Heart right ventricle (tissue), 16 donors: ENCODE measurements at regions of chr5 and their contacts with region 1.

Region 1: GRCh38 chr5:172106511-172107356 is 81.3 kb downstream of the STK10 start:
- DNase-seq: peak in 1 of 2 donors; percentile 72
- ATAC-seq: peak in 6 of 8 donors; percentile 28 to 46 (median 38)
- H3K4me3 ChIP-seq: peak overlapping the region in 7 of 10 donors; percentile 6 to 39 (median 26)
- H3K27ac ChIP-seq: peak overlapping the region in 1 of 10 donors; percentile 58
- H3K4me1 ChIP-seq: peaks cover 15 to 74% (median 59%) of the 10 kb centered on the region in 9 donors
- H3K27me3 ChIP-seq: no peaks in the 10 kb centered on the region
- CTCF ChIP-seq: peak; percentile 89 to 98 (median 93)

Region 2: GRCh38 chr5:171806976-171807747 is 299.6 kb before region 1 on chr5:
- intact Hi-C with region 1: no loop called
- DNase-seq: no peak
- ATAC-seq: no peak
- H3K4me3 ChIP-seq: no peak overlapping the region
- H3K27ac ChIP-seq: no peak overlapping the region
- H3K4me1 ChIP-seq: no peaks in the 10 kb centered on the region
- H3K27me3 ChIP-seq: peaks cover 0 to 35% (median 25%) of the 10 kb centered on the region in 7 donors
- CTCF ChIP-seq: no peak

Region 3: GRCh38 chr5:172076761-172077244 is 29.9 kb before region 1 on chr5:
- intact Hi-C with region 1: no loop called
- DNase-seq: no peak
- ATAC-seq: no peak
- H3K4me3 ChIP-seq: no peak overlapping the region
- H3K27ac ChIP-seq: no peak overlapping the region
- H3K4me1 ChIP-seq: peaks cover 0 to 34% (median 7%) of the 10 kb centered on the region in 9 donors
- H3K27me3 ChIP-seq: no peaks in the 10 kb centered on the region
- CTCF ChIP-seq: no peak

Region 4: DNA sequence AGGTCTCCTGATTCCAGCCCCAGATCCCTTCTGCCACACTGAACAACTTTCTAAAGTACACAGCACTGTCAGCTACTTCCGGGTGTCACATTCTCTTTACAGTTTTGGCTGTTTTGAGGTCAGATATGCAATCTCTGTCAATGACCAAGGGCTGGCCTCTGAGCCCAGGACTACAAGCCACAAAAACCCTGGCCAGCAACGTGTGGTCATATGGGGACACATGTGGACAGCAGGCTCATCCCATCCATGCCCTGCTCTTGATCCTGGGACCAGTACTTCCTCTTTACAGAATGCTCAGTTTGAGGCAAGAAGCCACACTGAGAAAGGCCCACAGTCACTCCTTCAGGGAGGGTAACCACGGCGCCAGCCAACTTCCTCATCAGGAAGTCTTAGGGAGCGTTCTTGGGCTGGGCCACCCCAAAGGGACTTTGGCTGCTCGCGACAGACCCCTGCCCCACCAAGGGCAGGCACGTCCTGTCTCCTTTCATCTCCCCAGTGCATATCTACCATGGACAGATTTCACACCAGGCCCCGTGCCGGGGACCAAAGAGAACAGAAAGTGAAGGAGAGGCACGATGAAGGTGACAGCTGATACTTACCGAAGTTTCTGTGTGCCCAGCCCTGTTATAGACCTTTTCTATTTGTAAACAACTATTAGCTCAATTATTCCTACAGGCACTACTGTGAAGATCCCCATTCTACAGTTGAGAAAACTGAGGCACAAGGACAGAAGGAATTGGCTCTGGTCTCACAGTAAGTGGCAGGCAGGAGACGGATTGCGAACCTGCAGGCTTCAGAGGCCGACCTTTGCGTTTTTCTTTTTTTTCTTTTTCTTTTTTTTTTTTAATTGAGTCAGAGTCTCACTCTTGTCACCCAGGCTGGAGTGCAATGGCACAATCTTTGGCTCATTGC is 44.0 kb after region 1 on chr5:
- intact Hi-C with region 1: loop called in 1 of 10 experiments (anchors 5 kb)
- DNase-seq: peak; percentile 42 to 52
- ATAC-seq: peak in 7 of 8 donors; percentile 61 to 82 (median 76)
- H3K4me3 ChIP-seq: peak overlapping the region in 1 of 10 donors; percentile 13
- H3K27ac ChIP-seq: peak overlapping the region in 8 of 10 donors; percentile 2 to 83 (median 29)
- H3K4me1 ChIP-seq: peaks cover 0 to 78% (median 35%) of the 10 kb centered on the region in 9 donors
- H3K27me3 ChIP-seq: no peaks in the 10 kb centered on the region
- CTCF ChIP-seq: no peak

Region 5: DNA sequence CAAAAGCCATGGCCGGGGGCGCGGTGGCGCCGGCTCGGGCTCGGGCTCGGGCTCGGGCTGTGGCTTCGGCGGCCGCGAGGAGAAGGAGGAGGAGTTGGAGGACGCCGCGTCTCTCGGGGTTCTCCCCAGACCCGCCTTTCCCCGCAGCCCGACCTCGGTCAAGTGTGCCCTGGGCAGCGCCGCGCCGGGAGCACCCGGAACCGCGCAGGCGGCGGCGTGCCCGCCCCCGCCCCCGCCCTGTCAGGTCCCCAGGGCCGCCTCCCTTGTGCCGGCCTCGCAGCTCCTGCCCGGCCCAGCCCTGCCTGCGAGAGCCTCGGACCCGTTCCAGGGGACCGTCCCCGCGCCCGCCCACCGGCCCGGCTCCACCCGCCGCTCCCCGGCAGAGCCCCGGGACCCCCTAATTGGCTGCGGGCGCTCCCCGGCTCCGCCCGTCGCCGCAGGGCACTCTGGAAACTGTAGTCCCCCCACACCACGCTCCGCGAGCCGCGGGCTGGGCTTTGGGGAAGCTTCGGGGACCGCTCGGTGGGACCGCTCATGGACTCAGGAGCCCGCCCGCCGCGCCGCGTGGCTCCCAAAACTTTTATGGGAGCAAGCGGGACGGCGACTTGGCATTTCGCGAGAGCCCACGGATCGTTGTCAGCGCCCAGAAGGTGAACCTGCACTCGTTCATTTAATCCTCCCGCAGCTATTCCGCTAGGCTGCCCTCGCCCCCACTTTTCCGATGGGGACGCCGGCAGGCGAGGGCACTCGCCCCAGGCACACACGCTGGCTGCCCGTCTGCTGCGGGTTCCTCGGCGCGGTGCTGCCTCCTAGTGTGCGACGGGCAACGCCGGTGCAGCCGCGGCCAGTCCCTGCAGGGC is 81.5 kb after region 1 on chr5 and contains the start of gene STK10:
- intact Hi-C with region 1: loop called (anchors 1 to 2 kb)
- DNase-seq: peak; percentile 92 to 95
- ATAC-seq: peak; percentile 93 to 98 (median 96)
- H3K4me3 ChIP-seq: peak within 1 kb of the TSS; percentile 76 to 100 (median 96)
- H3K27ac ChIP-seq: peak within 1 kb of the TSS; percentile 66 to 99 (median 96)
- H3K4me1 ChIP-seq: peaks cover 0 to 44% (median 35%) of the 10 kb centered on the region in 9 donors
- H3K27me3 ChIP-seq: no peaks in the 10 kb centered on the region
- CTCF ChIP-seq: peak; percentile 82 to 98 (median 91)
- total RNA-seq, gene STK10: 5.6 to 22.3 (median 9.8) TPM

Region 6: GRCh38 chr5:172293054-172293744 is 186.5 kb after region 1 on chr5:
- intact Hi-C with region 1: loop called in 9 of 10 experiments (anchors 2 to 10 kb)
- DNase-seq: peak; percentile 44 to 58
- ATAC-seq: peak; percentile 92 to 98 (median 94)
- H3K4me3 ChIP-seq: no peak overlapping the region
- H3K27ac ChIP-seq: no peak overlapping the region
- H3K4me1 ChIP-seq: peaks cover 0 to 9% (median 4%) of the 10 kb centered on the region in 9 donors
- H3K27me3 ChIP-seq: peaks cover 0 to 3% (median 0%) of the 10 kb centered on the region in 7 donors
- CTCF ChIP-seq: peak; percentile 69 to 91 (median 83)

Region 7: DNA sequence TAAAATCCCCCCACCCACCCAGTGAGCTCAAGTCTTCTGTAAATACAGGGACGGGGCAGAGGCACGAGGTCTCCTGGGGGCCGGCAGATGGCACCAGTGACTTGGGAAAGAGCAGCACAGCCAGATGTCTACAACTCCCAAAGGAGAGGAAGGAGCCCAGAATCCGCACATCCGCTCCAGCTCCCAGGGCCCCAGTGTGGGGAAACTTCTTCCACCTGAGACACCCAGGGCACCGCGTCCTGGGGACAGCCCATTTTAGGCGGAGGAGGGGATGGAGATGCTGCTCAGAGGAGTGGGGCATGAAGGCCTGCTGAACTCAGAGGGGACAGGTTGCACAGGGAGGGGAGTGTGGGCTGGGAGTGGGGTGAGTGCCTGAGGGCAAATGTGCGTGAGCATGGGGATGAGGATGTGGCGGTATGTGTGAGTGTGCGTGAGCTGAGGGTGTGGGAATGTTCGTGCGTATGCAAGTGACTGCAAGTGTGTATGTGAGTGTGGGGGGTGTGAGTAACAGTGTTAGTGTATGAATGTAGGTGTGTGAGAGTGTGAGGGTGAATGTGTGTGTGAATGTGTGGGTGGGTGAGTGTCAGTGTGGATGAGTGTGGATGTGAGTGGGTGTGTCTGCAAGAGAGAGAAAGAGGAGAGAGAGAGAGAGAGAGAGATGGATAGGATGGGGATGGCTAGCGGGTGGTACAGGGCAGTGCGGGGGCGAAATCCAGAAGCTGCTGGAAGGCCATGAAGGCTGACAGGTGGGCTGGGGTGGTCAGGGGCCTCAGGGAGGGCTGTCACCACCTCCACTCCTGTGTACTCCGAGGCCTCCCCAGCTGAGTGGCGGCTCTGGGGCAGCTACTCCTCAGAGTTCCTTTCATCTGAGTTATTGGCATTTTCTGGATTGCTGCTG is 600.8 kb after region 1 on chr5:
- intact Hi-C with region 1: loop called in 1 of 10 experiments (anchors 10 kb)
- DNase-seq: no peak
- ATAC-seq: peak; percentile 43 to 82 (median 66)
- H3K4me3 ChIP-seq: no peak overlapping the region
- H3K27ac ChIP-seq: no peak overlapping the region
- H3K4me1 ChIP-seq: peaks cover 0 to 4% (median 0%) of the 10 kb centered on the region in 9 donors
- H3K27me3 ChIP-seq: peaks cover 0 to 18% (median 0%) of the 10 kb centered on the region in 7 donors
- CTCF ChIP-seq: peak; percentile 11 to 60 (median 48)